Caco-2 (cell line): ENCODE measurements at regions of chr1 and their contacts with region 1.

Region 1: DNA sequence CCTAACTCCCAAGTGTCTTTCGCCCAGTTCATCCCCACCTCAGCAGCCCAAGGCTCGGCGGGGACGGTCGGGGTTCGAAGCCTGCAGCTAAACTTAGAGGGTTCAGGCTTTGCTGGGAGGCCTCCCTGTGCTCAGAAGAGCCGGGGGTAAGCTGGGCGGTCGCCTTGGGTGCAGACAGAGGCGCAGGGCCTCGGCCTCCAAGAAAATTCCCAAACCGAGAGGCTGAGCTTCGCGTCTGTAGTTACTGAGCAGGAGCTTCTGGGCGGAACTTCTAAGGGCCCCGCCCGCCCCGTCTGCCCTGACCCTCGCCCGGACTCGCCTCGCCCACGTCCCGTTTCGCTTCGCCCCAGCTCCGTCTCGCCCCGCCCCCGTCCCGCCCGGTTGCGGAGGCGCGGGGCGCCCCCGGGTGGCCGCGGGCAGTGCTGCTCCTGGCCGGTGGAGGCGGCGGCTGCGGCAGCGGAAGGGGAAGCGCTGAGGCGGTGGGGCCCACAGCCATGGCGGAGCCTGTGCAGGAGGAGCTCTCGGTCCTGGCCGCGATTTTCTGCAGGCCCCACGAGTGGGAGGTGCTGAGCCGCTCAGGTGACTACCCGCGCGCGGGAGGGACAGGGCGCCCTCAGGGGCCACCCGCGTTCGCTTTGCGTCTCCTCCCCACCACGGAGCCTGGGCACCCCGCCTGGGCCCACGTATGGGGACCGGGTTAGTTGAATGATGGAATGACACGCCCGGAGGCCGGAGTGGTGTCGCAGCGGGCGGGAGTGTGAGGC is at the start of gene RWDD3:
- DNase-seq: peak; percentile 90 to 92
- H3K4me3 ChIP-seq: peak within 1 kb of the TSS; percentile 85
- H3K4me3 Mint-ChIP-seq: peak within 1 kb of the TSS; percentile 88
- H3K27ac Mint-ChIP-seq: peak within 1 kb of the TSS; percentile 80
- H3K4me1 ChIP-seq: 0 out of 2 replicates have a peak, but pooled peaks cover 3% of the 10 kb centered on the region
- H3K4me1 Mint-ChIP-seq: peaks cover 15% of the 10 kb centered on the region
- H3K27me3 ChIP-seq: no peaks in the 10 kb centered on the region
- H3K27me3 Mint-ChIP-seq: no peaks in the 10 kb centered on the region
- CTCF ChIP-seq: peak; percentile 35 to 63
- total RNA-seq, gene RWDD3: 13.3 and 16.6 TPM in 2 replicates

Region 2: DNA sequence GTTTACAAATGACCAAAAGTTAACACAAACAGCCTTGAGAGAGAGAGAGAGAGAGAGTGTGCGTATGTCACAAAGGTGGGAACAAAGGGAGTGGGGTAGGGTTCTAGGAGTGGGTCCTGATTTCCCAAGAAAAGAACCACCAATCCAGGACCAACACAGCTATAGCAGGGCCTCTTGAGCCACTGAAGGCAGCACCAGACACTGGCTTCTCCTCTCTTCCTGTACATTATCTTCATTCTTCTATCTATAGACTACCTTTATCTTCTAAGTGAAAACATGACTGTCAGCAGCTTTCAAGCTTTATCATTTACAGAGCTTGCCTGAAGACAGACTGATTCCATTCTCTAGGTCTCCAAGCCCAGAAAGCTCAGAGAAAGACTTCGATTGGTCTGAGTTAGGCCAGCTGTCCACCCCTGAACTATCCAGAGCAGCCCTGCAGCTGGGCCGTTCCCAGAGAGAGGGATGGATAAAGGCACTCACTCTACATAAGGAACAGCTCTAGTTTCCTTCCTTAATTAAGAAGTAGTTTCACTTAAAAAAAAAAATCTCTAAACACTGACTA is 172.4 kb before region 1 on chr1:
- CTCF ChIA-PET with region 1: interaction called, 4 read pairs
- POLR2A ChIA-PET with region 1: interaction called, 8 read pairs
- intact Hi-C with region 1: loop called (anchors 1 kb)
- DNase-seq: no peak
- H3K4me3 ChIP-seq: no peak overlapping the region
- H3K4me3 Mint-ChIP-seq: no peak overlapping the region
- H3K27ac Mint-ChIP-seq: no peak overlapping the region
- H3K4me1 ChIP-seq: peaks cover 6% of the 10 kb centered on the region; the same call in 1 of the 2 replicates
- H3K4me1 Mint-ChIP-seq: peaks cover 15% of the 10 kb centered on the region
- H3K27me3 ChIP-seq: no peaks in the 10 kb centered on the region
- H3K27me3 Mint-ChIP-seq: no peaks in the 10 kb centered on the region
- CTCF ChIP-seq: no peak

Region 3: GRCh38 chr1:95084317-95085176 is 149.4 kb before region 1 on chr1:
- CTCF ChIA-PET with region 1: interaction called, 22 read pairs
- POLR2A ChIA-PET with region 1: no interaction called
- intact Hi-C with region 1: loop called (anchors 1 kb)
- DNase-seq: peak in 1 of 2 experiments; percentile 16
- H3K4me3 ChIP-seq: no peak overlapping the region
- H3K4me3 Mint-ChIP-seq: no peak overlapping the region
- H3K27ac Mint-ChIP-seq: no peak overlapping the region
- H3K4me1 ChIP-seq: peaks cover 34% of the 10 kb centered on the region
- H3K4me1 Mint-ChIP-seq: peaks cover 18% of the 10 kb centered on the region
- H3K27me3 ChIP-seq: no peaks in the 10 kb centered on the region
- H3K27me3 Mint-ChIP-seq: no peaks in the 10 kb centered on the region
- CTCF ChIP-seq: peak; percentile 35 to 48

Region 4: GRCh38 chr1:95223110-95223509 is 10.8 kb before region 1 on chr1:
- CTCF ChIA-PET with region 1: interaction called, 14 read pairs
- POLR2A ChIA-PET with region 1: interaction called, 3 read pairs
- intact Hi-C with region 1: no loop called
- DNase-seq: no peak
- H3K4me3 ChIP-seq: no peak overlapping the region
- H3K4me3 Mint-ChIP-seq: no peak overlapping the region
- H3K27ac Mint-ChIP-seq: no peak overlapping the region
- H3K4me1 ChIP-seq: no peaks in the 10 kb centered on the region
- H3K4me1 Mint-ChIP-seq: no peaks in the 10 kb centered on the region
- H3K27me3 ChIP-seq: no peaks in the 10 kb centered on the region
- H3K27me3 Mint-ChIP-seq: no peaks in the 10 kb centered on the region
- CTCF ChIP-seq: no peak

Region 5: DNA sequence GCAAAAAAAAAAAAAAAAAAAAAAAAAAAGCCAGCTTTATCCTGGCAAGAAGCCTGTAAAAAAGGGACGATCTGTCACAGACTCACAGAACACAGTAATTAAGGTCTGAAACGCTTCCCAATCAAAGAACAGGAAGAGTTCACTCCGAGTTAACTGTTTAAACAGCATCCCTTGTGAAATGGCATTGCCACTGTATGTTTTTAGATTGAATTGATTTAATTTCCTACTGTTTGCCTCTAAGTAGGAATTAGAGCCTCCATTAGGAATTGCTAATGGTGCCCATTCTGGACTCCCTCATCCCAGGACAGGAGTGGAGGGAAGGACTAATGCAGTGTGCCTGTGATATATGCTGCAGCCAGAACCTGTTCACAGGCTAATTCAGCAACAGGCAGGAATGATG is 370.9 kb after region 1 on chr1:
- CTCF ChIA-PET with region 1: no interaction called
- POLR2A ChIA-PET with region 1: no interaction called
- intact Hi-C with region 1: no loop called
- DNase-seq: no peak
- H3K4me3 ChIP-seq: no peak overlapping the region
- H3K4me3 Mint-ChIP-seq: no peak overlapping the region
- H3K27ac Mint-ChIP-seq: no peak overlapping the region
- H3K4me1 ChIP-seq: no peaks in the 10 kb centered on the region
- H3K4me1 Mint-ChIP-seq: no peaks in the 10 kb centered on the region
- H3K27me3 ChIP-seq: no peaks in the 10 kb centered on the region
- H3K27me3 Mint-ChIP-seq: no peaks in the 10 kb centered on the region
- CTCF ChIP-seq: no peak